Heart right ventricle (tissue), 16 donors: ENCODE measurements at regions of chr11 and their contacts with region 1.

Region 1: DNA sequence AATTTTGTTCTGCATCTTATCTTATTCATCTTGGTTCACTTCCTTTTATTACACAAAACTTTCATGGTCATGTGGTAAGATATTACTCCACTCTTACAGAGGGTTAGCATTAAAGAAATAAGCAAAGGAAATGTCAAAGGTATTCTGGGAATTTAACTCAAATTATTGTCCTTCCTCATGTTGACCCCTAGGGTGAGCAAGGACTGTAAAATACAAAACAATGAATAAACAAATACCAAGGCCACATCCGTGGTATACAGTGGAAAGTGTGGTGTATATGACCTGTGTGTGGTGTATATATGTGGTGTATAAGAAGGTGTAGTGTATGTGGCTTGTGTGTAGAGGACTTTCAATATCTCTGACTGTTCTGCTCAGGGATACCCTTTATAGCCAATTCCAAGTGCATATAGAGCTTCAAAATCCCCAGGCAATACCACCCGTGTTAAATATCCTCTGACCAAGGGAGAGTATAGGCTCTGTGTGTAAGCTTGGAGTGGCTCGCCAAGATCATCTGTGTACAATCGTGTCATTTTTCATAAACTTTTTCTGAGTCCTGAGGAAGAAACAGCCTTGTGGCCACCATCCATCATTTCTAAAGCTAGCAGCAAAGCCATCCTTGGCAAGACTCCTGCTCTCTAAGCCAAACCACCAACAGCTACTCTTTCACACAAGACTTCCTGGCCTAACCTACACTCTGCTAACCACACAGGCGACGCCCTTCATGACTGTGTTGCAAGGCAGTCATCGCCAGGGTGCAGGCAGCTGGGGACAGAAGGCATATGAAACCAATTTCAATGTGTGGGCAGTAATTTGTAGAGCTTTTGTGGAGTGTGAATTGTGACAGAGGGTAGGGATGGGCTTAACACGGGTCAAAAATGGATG is 548.0 kb downstream of the ETS1 start:
- DNase-seq: peak; percentile 4 to 21
- ATAC-seq: peak in 7 of 8 donors; percentile 33 to 79 (median 58)
- H3K4me3 ChIP-seq: no peak overlapping the region
- H3K27ac ChIP-seq: peak overlapping the region in 1 of 10 donors; percentile 78
- H3K4me1 ChIP-seq: peaks cover 0 to 36% (median 0%) of the 10 kb centered on the region in 9 donors
- H3K27me3 ChIP-seq: peaks cover 0 to 11% (median 0%) of the 10 kb centered on the region in 7 donors
- CTCF ChIP-seq: no peak

Region 2: GRCh38 chr11:127804747-127805400 is 234.5 kb before region 1 on chr11:
- intact Hi-C with region 1: no loop called
- DNase-seq: no peak
- ATAC-seq: no peak
- H3K4me3 ChIP-seq: no peak overlapping the region
- H3K27ac ChIP-seq: no peak overlapping the region
- H3K4me1 ChIP-seq: no peaks in the 10 kb centered on the region
- H3K27me3 ChIP-seq: no peaks in the 10 kb centered on the region
- CTCF ChIP-seq: no peak

Region 3: DNA sequence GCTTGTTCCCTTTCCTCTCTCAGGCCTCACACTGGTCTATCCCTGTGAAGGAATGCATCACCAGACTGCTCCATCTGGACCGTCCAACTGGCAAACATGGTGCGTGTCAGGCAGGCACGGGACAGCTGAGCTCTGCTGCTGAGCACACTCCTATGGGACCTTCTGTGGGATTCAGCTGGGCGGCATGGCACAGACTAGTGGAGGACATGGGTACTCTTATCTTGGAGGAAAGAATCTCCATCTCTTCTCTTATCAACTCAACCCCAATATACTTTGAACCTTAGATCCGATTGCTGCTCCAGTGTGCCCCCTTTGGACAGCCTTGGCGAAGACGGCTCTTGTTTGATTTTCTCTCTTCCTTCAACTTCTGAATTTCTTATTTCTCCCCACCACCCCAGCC is 45.6 kb before region 1 on chr11:
- intact Hi-C with region 1: no loop called
- DNase-seq: no peak
- ATAC-seq: no peak
- H3K4me3 ChIP-seq: no peak overlapping the region
- H3K27ac ChIP-seq: no peak overlapping the region
- H3K4me1 ChIP-seq: no peaks in the 10 kb centered on the region
- H3K27me3 ChIP-seq: no peaks in the 10 kb centered on the region
- CTCF ChIP-seq: no peak

Region 4: GRCh38 chr11:128334311-128335044 is 295.1 kb after region 1 on chr11:
- intact Hi-C with region 1: no loop called
- DNase-seq: peak; percentile 49 to 85
- ATAC-seq: peak; percentile 77 to 93 (median 88)
- H3K4me3 ChIP-seq: no peak overlapping the region
- H3K27ac ChIP-seq: peak overlapping the region; percentile 23 to 91 (median 68)
- H3K4me1 ChIP-seq: peaks cover 0 to 62% (median 43%) of the 10 kb centered on the region in 9 donors
- H3K27me3 ChIP-seq: no peaks in the 10 kb centered on the region
- CTCF ChIP-seq: no peak

Region 5: GRCh38 chr11:128859563-128860441 is 820.4 kb after region 1 on chr11:
- intact Hi-C with region 1: loop called in 4 of 10 experiments (anchors 5 to 10 kb)
- DNase-seq: peak; percentile 71 to 80
- ATAC-seq: peak; percentile 65 to 89 (median 86)
- H3K4me3 ChIP-seq: no peak overlapping the region
- H3K27ac ChIP-seq: peak overlapping the region in 4 of 10 donors; percentile 1 to 40 (median 22)
- H3K4me1 ChIP-seq: peaks cover 5 to 15% (median 10%) of the 10 kb centered on the region in 9 donors
- H3K27me3 ChIP-seq: no peaks in the 10 kb centered on the region
- CTCF ChIP-seq: peak; percentile 90 to 99 (median 96)

Region 6: GRCh38 chr11:128956401-128957201 is 917.2 kb after region 1 on chr11:
- intact Hi-C with region 1: loop called in 2 of 10 experiments (anchors 10 kb)
- DNase-seq: peak in 1 of 2 donors; percentile 58
- ATAC-seq: peak; percentile 59 to 89 (median 83)
- H3K4me3 ChIP-seq: no peak overlapping the region
- H3K27ac ChIP-seq: no peak overlapping the region
- H3K4me1 ChIP-seq: no peaks in the 10 kb centered on the region
- H3K27me3 ChIP-seq: peaks cover 0 to 20% (median 6%) of the 10 kb centered on the region in 7 donors
- CTCF ChIP-seq: peak; percentile 43 to 82 (median 75)